ENCODE measurements at regions of chr6 and their contacts with region 1.

Region 1: GRCh38 chr6:21003780-21004541 is 469.7 kb downstream of the CDKAL1 start:
- DNase-seq: peak; percentile 93
- H3K4me3 ChIP-seq: peak overlapping the region in 1 of 3 experiments; percentile 29
- H3K27ac ChIP-seq: peak overlapping the region; percentile 96
- H3K4me1 ChIP-seq: peaks cover 34% of the 10 kb centered on the region
- H3K27me3 ChIP-seq: no peaks in the 10 kb centered on the region
- CTCF ChIP-seq: no peak
- POLR2A ChIP-seq: no peak

Region 2: GRCh38 chr6:20732896-20733295 is 271.1 kb before region 1 on chr6:
- CTCF ChIA-PET with region 1: no interaction called
- POLR2A ChIA-PET with region 1: no interaction called
- dilution Hi-C with region 1: no loop called
- intact Hi-C with region 1: no loop called
- DNase-seq: no peak
- H3K4me3 ChIP-seq: no peak overlapping the region
- H3K27ac ChIP-seq: no peak overlapping the region
- H3K4me1 ChIP-seq: no peaks in the 10 kb centered on the region
- H3K27me3 ChIP-seq: no peaks in the 10 kb centered on the region
- CTCF ChIP-seq: no peak
- POLR2A ChIP-seq: no peak

Region 3: GRCh38 chr6:20811109-20811746 is 192.7 kb before region 1 on chr6:
- CTCF ChIA-PET with region 1: no interaction called
- POLR2A ChIA-PET with region 1: no interaction called
- dilution Hi-C with region 1: no loop called
- intact Hi-C with region 1: loop called (anchors 10 kb)
- DNase-seq: peak; percentile 95
- H3K4me3 ChIP-seq: no peak overlapping the region
- H3K27ac ChIP-seq: peak overlapping the region; percentile 95
- H3K4me1 ChIP-seq: peaks cover 12% of the 10 kb centered on the region
- H3K27me3 ChIP-seq: no peaks in the 10 kb centered on the region
- CTCF ChIP-seq: no peak
- POLR2A ChIP-seq: no peak

Region 4: DNA sequence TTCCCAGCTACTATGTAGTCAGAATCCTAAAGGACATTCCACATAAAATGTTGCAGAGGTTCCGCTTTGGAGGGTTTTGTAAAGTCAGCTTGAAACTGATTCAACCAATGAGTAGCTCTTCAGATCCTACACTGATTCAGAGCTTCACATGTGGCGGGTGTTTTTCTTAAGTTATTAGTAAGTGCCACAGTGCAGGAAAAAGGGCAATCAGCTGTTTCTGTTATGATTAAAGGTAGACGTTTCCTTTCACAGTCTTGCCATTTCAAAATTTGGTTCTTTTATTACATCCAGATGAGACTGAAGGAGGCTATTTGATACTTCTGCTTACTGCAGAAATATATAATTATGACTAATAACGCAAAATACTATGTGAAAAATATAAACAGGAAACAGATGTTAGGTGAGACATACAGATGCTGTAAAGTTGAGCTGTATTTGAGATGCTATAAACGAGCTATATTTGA is 25.8 kb before region 1 on chr6:
- CTCF ChIA-PET with region 1: interaction called, 5 read pairs
- POLR2A ChIA-PET with region 1: no interaction called
- dilution Hi-C with region 1: no loop called
- intact Hi-C with region 1: loop called (anchors 1 kb)
- DNase-seq: peak; percentile 93
- H3K4me3 ChIP-seq: no peak overlapping the region
- H3K27ac ChIP-seq: peak overlapping the region; percentile 40
- H3K4me1 ChIP-seq: peaks cover 18% of the 10 kb centered on the region
- H3K27me3 ChIP-seq: no peaks in the 10 kb centered on the region
- CTCF ChIP-seq: no peak
- POLR2A ChIP-seq: no peak

Region 5: GRCh38 chr6:21064756-21065340 is 60.9 kb after region 1 on chr6:
- CTCF ChIA-PET with region 1: no interaction called
- POLR2A ChIA-PET with region 1: no interaction called
- dilution Hi-C with region 1: no loop called
- intact Hi-C with region 1: loop called (anchors 5 kb)
- DNase-seq: peak; percentile 66
- H3K4me3 ChIP-seq: no peak overlapping the region
- H3K27ac ChIP-seq: no peak overlapping the region
- H3K4me1 ChIP-seq: peaks cover 21% of the 10 kb centered on the region
- H3K27me3 ChIP-seq: no peaks in the 10 kb centered on the region
- CTCF ChIP-seq: no peak
- POLR2A ChIP-seq: no peak

Region 6: DNA sequence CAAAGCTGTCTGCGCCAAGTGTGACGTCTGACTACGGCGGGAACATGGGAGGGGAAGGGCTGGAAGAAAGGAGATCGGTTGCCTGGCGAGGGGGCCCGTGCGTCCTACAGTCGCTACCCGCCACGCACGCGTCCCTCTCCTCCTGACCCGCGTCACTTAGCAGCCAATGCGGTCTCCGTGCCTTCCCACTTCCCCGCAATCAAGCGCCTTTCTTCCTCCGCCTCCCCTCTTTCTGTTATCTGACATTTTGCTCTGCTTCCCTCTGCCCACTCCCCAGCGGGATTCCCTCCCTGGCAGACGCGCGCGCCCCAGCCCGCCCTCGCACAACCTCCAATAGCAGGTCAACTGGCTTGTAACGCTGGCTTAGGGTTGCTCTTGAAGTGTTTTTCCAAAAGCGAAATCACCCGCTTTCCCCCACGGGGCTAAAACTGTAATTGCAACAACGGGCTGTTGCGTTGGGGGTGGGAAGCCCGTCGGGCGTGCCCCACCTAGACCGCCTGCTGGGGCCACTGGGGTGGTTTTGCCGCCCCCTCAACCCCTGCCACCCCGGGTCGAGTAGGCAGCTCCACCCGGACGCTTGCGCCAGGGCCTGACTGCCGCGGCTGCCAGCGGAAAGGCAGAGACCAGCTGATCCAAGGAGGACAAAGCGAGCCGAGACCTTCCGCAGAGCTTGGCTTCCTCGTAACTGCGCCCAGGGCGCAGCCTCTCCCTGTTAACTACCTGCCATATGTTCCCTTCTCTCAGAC is 583.4 kb after region 1 on chr6:
- CTCF ChIA-PET with region 1: interaction called, 6 read pairs
- POLR2A ChIA-PET with region 1: no interaction called
- dilution Hi-C with region 1: no loop called
- intact Hi-C with region 1: loop called (anchors 1 kb)
- DNase-seq: peak; percentile 78
- H3K4me3 ChIP-seq: peak overlapping the region; percentile 33 to 65 (median 46)
- H3K27ac ChIP-seq: peak overlapping the region; percentile 71
- H3K4me1 ChIP-seq: peaks cover 17% of the 10 kb centered on the region
- H3K27me3 ChIP-seq: no peaks in the 10 kb centered on the region
- CTCF ChIP-seq: peak in 1 of 2 donors; percentile 50
- POLR2A ChIP-seq: no peak